CD4-positive, alpha-beta T cell (primary cell): ENCODE measurements at regions of chr1 and their contacts with region 1.

Region 1: GRCh38 chr1:95043141-95043980 is 29.4 kb downstream of the ALG14 start:
- DNase-seq: peak; percentile 63 to 88 (median 69)
- ATAC-seq: peak; percentile 99
- H3K4me3 ChIP-seq: no peak overlapping the region
- H3K4me3 Mint-ChIP-seq: no peak overlapping the region
- H3K27ac ChIP-seq: no peak overlapping the region
- H3K27ac Mint-ChIP-seq: no peak overlapping the region
- H3K4me1 ChIP-seq: no peaks in the 10 kb centered on the region
- H3K4me1 Mint-ChIP-seq: no peaks in the 10 kb centered on the region
- H3K27me3 ChIP-seq: no peaks in the 10 kb centered on the region
- H3K27me3 Mint-ChIP-seq: no peaks in the 10 kb centered on the region
- CTCF ChIP-seq: peak; percentile 100

Region 2: GRCh38 chr1:94481473-94481933 is 561.9 kb before region 1 on chr1:
- CTCF ChIA-PET with region 1: no interaction called
- POLR2A ChIA-PET with region 1: no interaction called
- intact Hi-C with region 1: loop called (anchors 1 to 5 kb)
- DNase-seq: peak in 12 of 14 experiments; percentile 0 to 73 (median 12)
- ATAC-seq: peak; percentile 75
- H3K4me3 ChIP-seq: no peak overlapping the region
- H3K4me3 Mint-ChIP-seq: no peak overlapping the region
- H3K27ac ChIP-seq: no peak overlapping the region
- H3K27ac Mint-ChIP-seq: no peak overlapping the region
- H3K4me1 ChIP-seq: no peaks in the 10 kb centered on the region
- H3K4me1 Mint-ChIP-seq: no peaks in the 10 kb centered on the region
- H3K27me3 ChIP-seq: no peaks in the 10 kb centered on the region
- H3K27me3 Mint-ChIP-seq: no peaks in the 10 kb centered on the region
- CTCF ChIP-seq: peak; percentile 79

Region 3: GRCh38 chr1:94496076-94496755 is 547.1 kb before region 1 on chr1:
- CTCF ChIA-PET with region 1: no interaction called
- POLR2A ChIA-PET with region 1: no interaction called
- intact Hi-C with region 1: no loop called
- DNase-seq: no peak
- ATAC-seq: no peak
- H3K4me3 ChIP-seq: no peak overlapping the region
- H3K4me3 Mint-ChIP-seq: no peak overlapping the region
- H3K27ac ChIP-seq: no peak overlapping the region
- H3K27ac Mint-ChIP-seq: no peak overlapping the region
- H3K4me1 ChIP-seq: no peaks in the 10 kb centered on the region
- H3K4me1 Mint-ChIP-seq: no peaks in the 10 kb centered on the region
- H3K27me3 ChIP-seq: no peaks in the 10 kb centered on the region
- H3K27me3 Mint-ChIP-seq: no peaks in the 10 kb centered on the region
- CTCF ChIP-seq: no peak

Region 4: GRCh38 chr1:94854458-94855306 is 188.7 kb before region 1 on chr1:
- CTCF ChIA-PET with region 1: interaction called, 49 read pairs
- POLR2A ChIA-PET with region 1: interaction called, 8 read pairs
- intact Hi-C with region 1: loop called (anchors 1 kb)
- DNase-seq: peak; percentile 58 to 89 (median 66)
- ATAC-seq: peak; percentile 98
- H3K4me3 ChIP-seq: peak overlapping the region; percentile 53
- H3K4me3 Mint-ChIP-seq: no peak overlapping the region
- H3K27ac ChIP-seq: no peak overlapping the region
- H3K27ac Mint-ChIP-seq: no peak overlapping the region
- H3K4me1 ChIP-seq: peaks cover 9% of the 10 kb centered on the region
- H3K4me1 Mint-ChIP-seq: no peaks in the 10 kb centered on the region
- H3K27me3 ChIP-seq: peaks cover 0 to 4% of the 10 kb centered on the region in 2 experiments
- H3K27me3 Mint-ChIP-seq: peaks cover 3% of the 10 kb centered on the region
- CTCF ChIP-seq: peak; percentile 80

Region 5: GRCh38 chr1:95742591-95743089 is 699.3 kb after region 1 on chr1:
- CTCF ChIA-PET with region 1: no interaction called
- POLR2A ChIA-PET with region 1: no interaction called
- intact Hi-C with region 1: no loop called
- DNase-seq: no peak
- ATAC-seq: no peak
- H3K4me3 ChIP-seq: no peak overlapping the region
- H3K4me3 Mint-ChIP-seq: no peak overlapping the region
- H3K27ac ChIP-seq: no peak overlapping the region
- H3K27ac Mint-ChIP-seq: no peak overlapping the region
- H3K4me1 ChIP-seq: no peaks in the 10 kb centered on the region
- H3K4me1 Mint-ChIP-seq: no peaks in the 10 kb centered on the region
- H3K27me3 ChIP-seq: no peaks in the 10 kb centered on the region
- H3K27me3 Mint-ChIP-seq: no peaks in the 10 kb centered on the region
- CTCF ChIP-seq: no peak